ENCODE measurements at regions of chr1 and their contacts with region 1.

Region 1: DNA sequence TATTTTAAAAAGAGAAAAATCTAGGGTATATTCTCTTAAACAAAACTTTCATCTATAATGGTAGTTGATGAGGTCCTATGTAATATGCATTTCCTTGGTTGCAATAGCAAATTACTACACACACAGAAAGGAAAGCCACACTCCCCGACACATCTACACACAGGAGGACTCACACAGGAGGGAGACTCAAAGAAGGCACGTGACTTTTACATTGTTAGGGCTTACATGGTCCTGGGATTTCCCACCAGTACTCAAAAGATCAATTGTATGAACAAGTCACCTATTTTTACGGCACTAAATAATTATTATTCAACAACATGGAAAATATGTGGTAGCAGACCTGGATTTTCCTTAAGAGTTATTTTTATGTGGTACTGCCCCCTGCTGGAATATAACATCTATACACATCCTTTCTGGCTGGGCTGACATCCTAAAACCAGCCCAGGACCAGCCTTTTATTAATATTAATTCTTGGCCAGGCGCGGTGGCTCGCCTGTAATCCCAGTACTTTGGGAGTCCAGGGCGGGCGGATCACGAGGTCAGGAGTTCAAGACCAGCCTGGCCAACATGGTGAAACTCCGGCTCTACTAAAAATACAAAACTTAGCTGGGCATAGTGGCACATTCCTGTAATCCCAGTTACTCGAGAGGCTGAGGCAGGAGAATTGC is 33.9 kb upstream of the LGALS8 start:
- DNase-seq: peak; percentile 67

Region 2: GRCh38 chr1:236103646-236104218 is 386.1 kb before region 1 on chr1:
- in situ Hi-C with region 1: loop called (anchors 25 kb)
- DNase-seq: peak; percentile 81